Tibial artery (tissue), 4 donors: ENCODE measurements at regions of chr17 and their contacts with region 1.

Region 1: GRCh38 chr17:21019976-21020586 is 22.7 kb downstream of the USP22 start:
- DNase-seq: peak in 1 of 2 donors; percentile 79
- H3K4me3 ChIP-seq: no peak overlapping the region
- H3K27ac ChIP-seq: peak overlapping the region in 1 of 2 donors; percentile 34
- H3K4me1 ChIP-seq: peaks cover 0 to 55% (median 14%) of the 10 kb centered on the region in 4 donors
- H3K27me3 ChIP-seq: no peaks in the 10 kb centered on the region
- CTCF ChIP-seq: peak; percentile 34 to 53

Region 2: GRCh38 chr17:21098934-21099689 is 79.0 kb after region 1 on chr17:
- intact Hi-C with region 1: loop called (anchors 2 kb)
- DNase-seq: peak in 1 of 2 donors; percentile 43
- H3K4me3 ChIP-seq: peak overlapping the region; percentile 44 to 53
- H3K27ac ChIP-seq: no peak overlapping the region
- H3K4me1 ChIP-seq: peaks cover 0 to 15% (median 6%) of the 10 kb centered on the region in 4 donors
- H3K27me3 ChIP-seq: no peaks in the 10 kb centered on the region
- CTCF ChIP-seq: no peak